ENCODE measurements at regions of chr17 and their contacts with region 1.

Region 1: DNA sequence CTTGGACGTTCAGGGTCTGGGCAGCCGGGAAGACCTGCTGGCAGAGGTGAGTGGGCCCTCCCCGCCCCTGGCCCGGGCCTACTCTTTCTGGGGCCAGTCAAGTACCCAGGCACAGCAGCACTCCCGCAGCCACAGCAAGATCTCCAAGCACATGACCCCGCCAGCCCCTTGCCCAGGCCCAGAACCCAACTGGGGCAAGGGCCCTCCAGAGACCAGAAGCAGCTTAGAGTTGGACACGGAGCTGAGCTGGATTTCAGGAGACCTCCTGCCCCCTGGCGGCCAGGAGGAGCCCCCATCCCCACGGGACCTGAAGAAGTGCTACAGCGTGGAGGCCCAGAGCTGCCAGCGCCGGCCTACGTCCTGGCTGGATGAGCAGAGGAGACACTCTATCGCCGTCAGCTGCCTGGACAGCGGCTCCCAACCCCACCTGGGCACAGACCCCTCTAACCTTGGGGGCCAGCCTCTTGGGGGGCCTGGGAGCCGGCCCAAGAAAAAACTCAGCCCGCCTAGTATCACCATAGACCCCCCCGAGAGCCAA is 8.6 kb upstream of the ABCC3 start:
- DNase-seq: peak; percentile 15 to 76 (median 53)
- ATAC-seq: peak; percentile 60 to 80 (median 68)
- H3K4me3 ChIP-seq: no peak overlapping the region
- H3K4me3 Mint-ChIP-seq: no peak overlapping the region
- H3K27ac ChIP-seq: no peak overlapping the region
- H3K27ac Mint-ChIP-seq: no peak overlapping the region
- H3K4me1 ChIP-seq: peaks cover 0 to 6% of the 10 kb centered on the region in 2 experiments
- H3K4me1 Mint-ChIP-seq: peaks cover 0 to 3% (median 2%) of the 10 kb centered on the region in 3 donors
- H3K27me3 ChIP-seq: peaks cover 2 to 90% of the 10 kb centered on the region in 2 experiments
- H3K27me3 Mint-ChIP-seq: peaks cover 42 to 63% of the 10 kb centered on the region in 2 donors

Region 2: GRCh38 chr17:50605429-50605828 is 20.7 kb before region 1 on chr17:
- CTCF ChIA-PET with region 1: interaction called in 1 of 2 experiments, 14 read pairs
- POLR2A ChIA-PET with region 1: no interaction called
- DNase-seq: no peak
- ATAC-seq: no peak
- H3K4me3 ChIP-seq: no peak overlapping the region
- H3K4me3 Mint-ChIP-seq: no peak overlapping the region
- H3K27ac ChIP-seq: no peak overlapping the region
- H3K27ac Mint-ChIP-seq: no peak overlapping the region
- H3K4me1 ChIP-seq: no peaks in the 10 kb centered on the region
- H3K4me1 Mint-ChIP-seq: no peaks in the 10 kb centered on the region
- H3K27me3 ChIP-seq: peaks cover 0 to 79% of the 10 kb centered on the region in 2 experiments
- H3K27me3 Mint-ChIP-seq: peaks cover 21 to 42% of the 10 kb centered on the region in 2 donors

Region 3: GRCh38 chr17:50649042-50649904 is 23.2 kb after region 1 on chr17:
- CTCF ChIA-PET with region 1: no interaction called
- POLR2A ChIA-PET with region 1: no interaction called
- DNase-seq: no peak
- ATAC-seq: no peak
- H3K4me3 ChIP-seq: no peak overlapping the region
- H3K4me3 Mint-ChIP-seq: no peak overlapping the region
- H3K27ac ChIP-seq: no peak overlapping the region
- H3K27ac Mint-ChIP-seq: no peak overlapping the region
- H3K4me1 ChIP-seq: no peaks in the 10 kb centered on the region
- H3K4me1 Mint-ChIP-seq: no peaks in the 10 kb centered on the region
- H3K27me3 ChIP-seq: peaks cover 0 to 4% of the 10 kb centered on the region in 2 experiments
- H3K27me3 Mint-ChIP-seq: peaks cover 8 to 9% of the 10 kb centered on the region in 2 donors

Measured in T-cell (primary cell).